Activated CD4-positive, alpha-beta memory T cell treated with anti-CD3 and anti-CD28 coated beads, Interleukin-2, amount 10 ng/mL, durations not matched to agents 7 days and 5 days (primary cell): ENCODE measurements at regions of chr6 and their contacts with region 1.

Region 1: GRCh38 chr6:42104095-42104806 is 38.2 kb downstream of the C6orf132 start:
- DNase-seq: peak; percentile 79
- H3K4me3 Mint-ChIP-seq: peak overlapping the region; percentile 67
- H3K27ac Mint-ChIP-seq: peak overlapping the region; percentile 57
- H3K4me1 Mint-ChIP-seq: peaks cover 42% of the 10 kb centered on the region
- H3K27me3 Mint-ChIP-seq: peaks cover 2% of the 10 kb centered on the region

Region 2: DNA sequence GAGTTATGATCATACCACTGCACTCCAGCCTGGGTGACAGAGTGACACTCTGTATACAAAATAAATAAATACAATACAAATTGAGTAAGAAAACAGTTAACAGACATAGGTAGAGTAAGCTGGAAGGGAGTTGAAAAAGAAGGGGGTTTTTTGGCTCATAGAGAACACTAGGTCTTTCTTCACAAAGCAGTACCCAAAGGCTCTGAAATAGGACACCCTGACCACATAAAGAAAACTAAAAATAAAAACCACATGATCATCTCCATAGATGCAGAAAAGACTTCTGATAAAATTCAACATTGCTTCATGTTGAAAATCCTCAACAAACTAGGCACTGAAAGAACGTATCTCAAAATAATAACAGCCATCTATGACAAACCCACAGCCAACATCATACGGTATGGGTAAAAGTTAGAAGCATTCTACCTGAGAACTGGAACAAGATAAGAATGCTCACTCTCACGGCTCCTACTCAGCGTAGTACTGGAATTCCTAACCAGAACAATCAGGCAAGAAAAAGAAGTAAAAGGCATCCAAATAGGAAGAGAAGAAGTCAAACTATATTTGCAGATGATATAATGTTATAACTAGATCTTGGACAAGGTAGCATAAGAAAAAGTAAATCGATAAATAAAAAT is 268.1 kb before region 1 on chr6:
- CTCF ChIA-PET with region 1: no interaction called
- POLR2A ChIA-PET with region 1: no interaction called
- DNase-seq: no peak
- H3K4me3 Mint-ChIP-seq: no peak overlapping the region
- H3K27ac Mint-ChIP-seq: no peak overlapping the region
- H3K4me1 Mint-ChIP-seq: no peaks in the 10 kb centered on the region
- H3K27me3 Mint-ChIP-seq: no peaks in the 10 kb centered on the region

Region 3: DNA sequence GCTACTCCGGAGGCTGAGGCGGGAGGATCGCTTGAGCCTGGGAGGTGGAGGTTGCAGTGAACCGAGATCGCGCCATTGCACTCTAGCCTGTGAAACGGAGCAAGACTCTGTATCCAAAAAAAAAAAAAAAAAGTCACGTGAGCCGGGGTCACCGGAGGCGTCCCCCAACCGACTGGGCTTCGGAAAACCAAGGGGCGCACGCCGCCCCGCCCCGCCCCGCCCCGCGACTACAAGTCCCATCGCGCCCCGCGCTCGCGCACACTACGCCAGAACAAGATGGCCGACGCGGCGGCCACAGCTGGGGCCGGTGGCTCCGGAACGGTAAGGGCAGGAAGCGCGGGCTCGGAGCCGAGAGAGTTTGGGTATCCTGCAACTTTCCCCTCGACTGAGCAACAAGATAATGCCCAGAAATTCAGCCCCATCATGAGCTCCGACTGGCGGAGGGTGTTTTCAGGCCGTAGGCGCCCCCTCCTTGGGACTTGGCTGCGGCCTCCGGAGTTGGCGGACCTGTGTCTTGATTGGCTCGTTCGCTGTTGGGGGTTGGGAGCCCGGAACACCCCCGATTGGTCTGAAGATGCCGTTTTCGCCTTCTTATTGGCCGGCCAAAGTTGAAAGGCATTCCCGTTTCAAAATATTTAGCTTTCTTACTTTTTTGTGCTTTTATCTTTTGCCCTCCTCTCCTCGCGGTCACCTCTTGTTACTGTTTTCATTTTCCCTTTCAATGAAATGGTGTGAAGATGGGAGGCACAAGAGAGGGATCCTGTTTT is 53.8 kb before region 1 on chr6 and contains the start of gene TAF8:
- CTCF ChIA-PET with region 1: interaction called, 17 read pairs
- POLR2A ChIA-PET with region 1: interaction called, 8 read pairs
- DNase-seq: peak; percentile 91
- H3K4me3 Mint-ChIP-seq: peak within 1 kb of the TSS; percentile 82
- H3K27ac Mint-ChIP-seq: peak within 1 kb of the TSS; percentile 94
- H3K4me1 Mint-ChIP-seq: peaks cover 75% of the 10 kb centered on the region
- H3K27me3 Mint-ChIP-seq: no peaks in the 10 kb centered on the region
- total RNA-seq, gene TAF8: 48.0 to 55.1 TPM

Region 4: GRCh38 chr6:42086046-42087035 is 17.9 kb before region 1 on chr6:
- CTCF ChIA-PET with region 1: interaction called, 18 read pairs
- POLR2A ChIA-PET with region 1: interaction called, 5 read pairs
- DNase-seq: no peak
- H3K4me3 Mint-ChIP-seq: no peak overlapping the region
- H3K27ac Mint-ChIP-seq: no peak overlapping the region
- H3K4me1 Mint-ChIP-seq: no peaks in the 10 kb centered on the region
- H3K27me3 Mint-ChIP-seq: no peaks in the 10 kb centered on the region

Region 5: DNA sequence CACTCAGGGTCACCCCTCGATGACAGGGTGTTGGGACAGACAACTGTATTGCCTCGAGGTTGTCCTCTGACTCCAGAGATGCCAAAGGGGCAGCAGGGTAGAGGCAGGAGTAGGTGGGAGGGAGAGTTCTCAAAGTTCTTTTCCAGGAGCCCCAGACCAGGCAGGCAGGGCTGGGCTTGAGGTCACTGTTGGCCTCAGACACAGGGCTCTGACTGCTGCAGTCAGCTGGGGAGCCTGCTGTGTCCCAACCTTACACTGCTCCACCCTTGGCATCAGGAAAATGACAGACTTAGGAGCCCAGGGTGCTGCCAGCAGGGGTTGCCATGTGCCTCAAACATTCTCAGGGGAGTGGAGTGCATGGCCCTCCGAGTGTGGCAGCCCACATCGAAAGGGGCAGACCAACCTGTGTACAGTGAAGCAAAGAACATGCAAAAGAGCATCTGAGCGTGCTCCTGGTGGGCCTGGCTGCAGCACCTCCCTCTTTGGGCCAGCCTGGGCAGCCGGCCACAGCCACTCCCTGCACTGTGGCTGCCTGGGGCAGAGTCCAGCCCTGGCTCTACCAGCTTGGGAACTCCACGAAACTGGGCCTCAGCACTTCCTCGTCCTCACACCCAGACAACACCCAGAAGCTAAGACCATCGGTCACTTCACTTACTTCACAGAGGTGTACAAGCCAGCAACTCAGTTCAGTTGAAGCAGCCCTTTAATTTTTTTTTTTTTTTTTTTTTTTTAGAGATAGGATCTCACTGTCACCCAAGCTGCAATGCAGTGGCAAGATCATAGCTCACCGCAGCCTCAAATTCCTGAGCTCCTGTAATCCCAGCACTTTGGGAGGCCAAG is 14.1 kb after region 1 on chr6:
- CTCF ChIA-PET with region 1: interaction called, 10 read pairs
- POLR2A ChIA-PET with region 1: no interaction called
- DNase-seq: no peak
- H3K4me3 Mint-ChIP-seq: no peak overlapping the region
- H3K27ac Mint-ChIP-seq: no peak overlapping the region
- H3K4me1 Mint-ChIP-seq: no peaks in the 10 kb centered on the region
- H3K27me3 Mint-ChIP-seq: peaks cover 9% of the 10 kb centered on the region

Region 6: GRCh38 chr6:42482174-42482573 is 377.9 kb after region 1 on chr6:
- CTCF ChIA-PET with region 1: no interaction called
- POLR2A ChIA-PET with region 1: no interaction called
- DNase-seq: no peak
- H3K4me3 Mint-ChIP-seq: no peak overlapping the region
- H3K27ac Mint-ChIP-seq: no peak overlapping the region
- H3K4me1 Mint-ChIP-seq: no peaks in the 10 kb centered on the region
- H3K27me3 Mint-ChIP-seq: peaks cover 6% of the 10 kb centered on the region

Region 7: GRCh38 chr6:42563697-42564505 is 459.6 kb after region 1 on chr6 and contains the start of gene UBR2:
- CTCF ChIA-PET with region 1: interaction called, 10 read pairs
- POLR2A ChIA-PET with region 1: no interaction called
- DNase-seq: peak; percentile 95
- H3K4me3 Mint-ChIP-seq: peak within 1 kb of the TSS; percentile 92
- H3K27ac Mint-ChIP-seq: peak within 1 kb of the TSS; percentile 83
- H3K4me1 Mint-ChIP-seq: peaks cover 33% of the 10 kb centered on the region
- H3K27me3 Mint-ChIP-seq: no peaks in the 10 kb centered on the region
- total RNA-seq, gene UBR2: 34.0 to 36.2 TPM